Sigmoid colon (tissue), 7 donors: ENCODE measurements at regions of chr14 and their contacts with region 1.

Region 1: DNA sequence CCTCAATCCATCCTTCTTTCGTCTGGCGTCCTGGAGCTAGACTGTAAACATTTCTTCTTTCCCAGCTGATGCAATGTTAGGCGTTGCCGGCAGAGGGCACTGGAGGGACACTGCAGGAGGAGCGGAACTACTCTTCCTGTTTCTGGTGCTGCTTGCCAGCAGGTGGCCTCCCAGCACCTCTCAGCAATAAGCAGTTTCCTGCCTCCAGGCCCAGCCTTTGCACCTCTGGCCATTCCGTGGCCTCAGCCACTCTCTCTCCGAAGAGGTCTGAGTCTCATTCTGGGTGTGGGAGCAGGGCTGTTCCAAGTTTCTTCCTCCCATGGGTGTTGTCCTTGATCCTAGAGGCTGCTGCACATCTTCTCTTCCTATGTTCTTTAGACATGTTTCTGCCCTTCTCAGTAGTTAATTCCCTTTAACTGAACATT is 7.5 kb upstream of the ASPG start:
- DNase-seq: peak; percentile 89
- H3K4me3 ChIP-seq: no peak overlapping the region
- H3K27ac ChIP-seq: no peak overlapping the region
- H3K4me1 ChIP-seq: peaks cover 0 to 6% (median 0%) of the 10 kb centered on the region in 4 donors
- H3K27me3 ChIP-seq: peaks cover 0 to 10% (median 0%) of the 10 kb centered on the region in 3 donors
- CTCF ChIP-seq: peak; percentile 92 to 99 (median 98)
- EP300 ChIP-seq: no peak
- POLR2A ChIP-seq: no peak

Region 2: GRCh38 chr14:104037903-104038302 is 40.1 kb before region 1 on chr14:
- intact Hi-C with region 1: no loop called
- DNase-seq: no peak
- H3K4me3 ChIP-seq: no peak overlapping the region
- H3K27ac ChIP-seq: no peak overlapping the region
- H3K4me1 ChIP-seq: no peaks in the 10 kb centered on the region
- H3K27me3 ChIP-seq: peaks cover 0 to 12% (median 0%) of the 10 kb centered on the region in 3 donors
- CTCF ChIP-seq: no peak
- EP300 ChIP-seq: no peak
- POLR2A ChIP-seq: no peak

Region 3: DNA sequence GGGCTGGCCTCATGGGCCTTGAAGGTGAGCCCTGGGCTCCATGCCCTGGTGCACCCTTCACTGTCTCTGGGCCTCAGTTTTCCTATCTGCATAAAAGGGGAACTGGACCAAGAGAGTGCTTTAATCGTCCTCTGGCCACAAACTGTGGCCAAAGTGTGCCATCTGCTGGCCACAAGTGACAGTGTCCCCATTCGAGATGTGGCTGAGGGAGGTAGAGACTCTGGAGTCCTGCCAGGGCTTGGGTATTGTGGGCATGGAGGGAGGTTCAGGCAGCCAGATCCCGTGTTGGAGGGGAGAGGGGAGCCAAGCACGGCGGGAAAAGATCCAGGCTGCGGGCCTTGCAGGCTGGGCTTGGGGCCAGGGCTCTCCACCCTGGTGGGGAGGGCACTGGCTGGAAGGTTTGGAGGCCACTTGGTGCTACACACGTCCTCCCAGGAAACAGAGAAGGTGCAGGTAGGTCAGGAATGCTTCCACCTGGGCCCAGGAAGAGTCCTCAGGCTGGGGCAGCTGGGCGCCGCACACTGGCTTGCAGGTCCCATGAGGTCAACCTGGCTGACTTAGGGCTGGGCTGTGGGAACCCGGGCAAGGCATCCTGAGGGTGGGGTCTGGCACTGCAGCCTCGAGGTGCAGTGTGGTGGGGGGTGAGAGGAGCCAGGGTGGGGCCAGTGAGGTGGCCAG is 53.1 kb after region 1 on chr14:
- intact Hi-C with region 1: loop called (anchors 2 kb)
- DNase-seq: peak; percentile 62
- H3K4me3 ChIP-seq: no peak overlapping the region
- H3K27ac ChIP-seq: no peak overlapping the region
- H3K4me1 ChIP-seq: peaks cover 0 to 10% (median 7%) of the 10 kb centered on the region in 4 donors
- H3K27me3 ChIP-seq: peaks cover 13 to 46% (median 26%) of the 10 kb centered on the region in 3 donors
- CTCF ChIP-seq: peak in 2 of 4 experiments; percentile 33 to 46
- EP300 ChIP-seq: no peak
- POLR2A ChIP-seq: no peak

Region 4: DNA sequence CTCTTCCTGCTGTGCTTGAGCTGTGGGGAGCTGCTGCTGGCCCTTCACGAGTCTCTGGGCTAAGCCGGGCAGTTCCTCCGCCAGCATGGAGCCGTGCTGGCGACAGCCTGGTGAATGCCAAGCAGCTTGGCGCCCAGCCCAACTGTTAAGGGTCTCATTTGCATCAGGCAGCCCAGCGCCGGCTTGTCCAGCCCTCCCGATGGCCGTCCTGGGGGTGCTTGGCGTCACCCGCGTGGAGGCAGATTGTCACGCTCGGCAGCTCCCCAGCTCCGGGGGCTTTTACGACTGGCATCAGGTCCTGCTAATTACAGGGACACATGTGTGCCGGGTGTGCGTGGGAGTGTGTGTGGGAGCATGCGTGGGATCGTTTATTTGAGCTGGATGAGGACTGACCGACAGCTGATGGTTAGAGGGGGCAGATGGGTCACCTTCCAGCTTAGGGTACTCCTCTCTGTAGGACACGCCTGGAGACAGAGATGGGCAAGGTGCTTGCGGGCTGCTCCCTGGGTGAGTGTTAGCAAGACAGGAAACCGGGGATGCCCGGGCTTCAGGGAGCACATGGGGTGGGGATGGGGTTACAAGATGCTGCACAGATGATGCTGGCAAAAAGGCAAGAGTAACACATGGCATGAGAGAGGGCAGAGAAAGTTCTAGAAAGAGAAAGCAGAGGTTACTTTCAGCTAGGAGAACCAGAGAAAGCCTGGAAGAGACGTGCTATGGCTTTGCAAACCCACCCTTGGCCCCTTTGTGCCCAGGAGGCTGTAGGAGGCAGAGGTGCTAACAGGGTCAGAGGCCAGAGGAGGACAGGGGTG is 124.4 kb after region 1 on chr14:
- intact Hi-C with region 1: no loop called
- DNase-seq: no peak
- H3K4me3 ChIP-seq: no peak overlapping the region
- H3K27ac ChIP-seq: no peak overlapping the region
- H3K4me1 ChIP-seq: no peaks in the 10 kb centered on the region
- H3K27me3 ChIP-seq: no peaks in the 10 kb centered on the region
- CTCF ChIP-seq: no peak
- EP300 ChIP-seq: no peak
- POLR2A ChIP-seq: no peak

Region 5: DNA sequence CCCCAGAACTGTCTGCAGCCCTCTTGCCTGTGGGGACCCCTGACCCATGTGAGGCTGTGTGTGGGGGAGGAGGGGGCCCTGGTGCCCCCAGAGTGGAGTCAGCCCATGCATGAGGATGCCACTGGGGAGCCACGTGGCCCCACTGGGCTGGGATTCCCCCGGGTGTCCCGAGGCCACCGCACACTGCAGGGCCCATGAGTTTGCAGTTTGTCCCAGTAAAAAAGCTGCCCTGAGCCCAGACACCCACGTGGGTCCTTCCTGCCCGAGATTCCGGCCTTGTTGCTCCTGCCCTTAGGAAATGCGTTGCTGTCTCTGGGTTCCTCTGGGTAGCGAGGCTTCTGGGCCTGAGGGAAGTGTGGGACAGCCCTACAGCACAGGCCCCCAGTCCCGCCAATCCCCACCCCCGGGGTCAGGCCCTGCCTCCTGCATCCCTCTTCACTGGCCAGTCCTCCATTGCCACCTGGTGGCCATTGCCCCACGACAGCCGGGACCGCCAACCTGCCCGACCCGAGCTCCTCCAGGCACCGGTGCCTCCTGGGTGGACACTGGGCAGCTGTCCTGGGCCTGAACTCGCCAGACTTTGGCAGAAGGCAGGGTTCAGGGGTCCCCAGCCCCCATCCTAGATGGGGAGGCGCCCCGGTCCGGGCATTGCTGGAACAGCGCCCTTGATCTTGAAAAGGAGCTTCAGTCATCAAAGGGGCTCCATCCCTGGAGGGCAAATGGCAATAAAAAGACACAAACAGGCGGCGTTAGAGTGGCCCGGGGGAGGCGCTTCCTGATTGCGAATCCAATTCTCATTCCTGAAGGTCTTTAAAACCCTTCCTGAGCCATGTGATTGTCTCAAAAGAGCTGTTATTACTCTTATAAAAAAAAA is 485.9 kb after region 1 on chr14:
- intact Hi-C with region 1: loop called (anchors 2 kb)
- DNase-seq: peak; percentile 81
- H3K4me3 ChIP-seq: no peak overlapping the region
- H3K27ac ChIP-seq: no peak overlapping the region
- H3K4me1 ChIP-seq: peaks cover 0 to 9% (median 4%) of the 10 kb centered on the region in 4 donors
- H3K27me3 ChIP-seq: peaks cover 0 to 56% (median 35%) of the 10 kb centered on the region in 3 donors
- CTCF ChIP-seq: peak; percentile 58 to 92 (median 73)
- EP300 ChIP-seq: no peak
- POLR2A ChIP-seq: no peak

Region 6: GRCh38 chr14:104639889-104640548 is 562.0 kb after region 1 on chr14:
- intact Hi-C with region 1: loop called (anchors 5 kb)
- DNase-seq: peak; percentile 72
- H3K4me3 ChIP-seq: no peak overlapping the region
- H3K27ac ChIP-seq: no peak overlapping the region
- H3K4me1 ChIP-seq: peaks cover 0 to 7% (median 3%) of the 10 kb centered on the region in 4 donors
- H3K27me3 ChIP-seq: peaks cover 0 to 33% (median 3%) of the 10 kb centered on the region in 3 donors
- CTCF ChIP-seq: peak; percentile 56 to 83 (median 67)
- EP300 ChIP-seq: no peak
- POLR2A ChIP-seq: no peak